ENCODE measurements at regions of chr18 and their contacts with region 1.

Region 1: GRCh38 chr18:55781481-55781957 is 193.5 kb upstream of the TCF4 start:
- DNase-seq: peak; percentile 50
- ATAC-seq: peak; percentile 57

Region 2: GRCh38 chr18:55234366-55235093 is 547.0 kb before region 1 on chr18:
- intact Hi-C with region 1: loop called (anchors 5 kb)
- DNase-seq: peak; percentile 69
- ATAC-seq: peak; percentile 92

Region 3: GRCh38 chr18:55401638-55402191 is 379.8 kb before region 1 on chr18:
- intact Hi-C with region 1: loop called (anchors 5 kb)
- DNase-seq: no peak
- ATAC-seq: peak; percentile 44

Region 4: GRCh38 chr18:55509631-55510324 is 271.7 kb before region 1 on chr18:
- intact Hi-C with region 1: loop called (anchors 10 kb)
- DNase-seq: no peak
- ATAC-seq: no peak

Measured in Right ventricle myocardium inferior (tissue), 1 donor.